ENCODE measurements at regions of chr9 and their contacts with region 1.

Region 1: GRCh38 chr9:4984621-4985385 is at the start of gene JAK2:
- DNase-seq: peak; percentile 87
- H3K4me3 ChIP-seq: peak within 1 kb of the TSS; percentile 72
- H3K27ac ChIP-seq: peak within 1 kb of the TSS; percentile 72
- H3K4me1 ChIP-seq: peaks cover 31% of the 10 kb centered on the region
- CTCF ChIP-seq: peak; percentile 49
- total RNA-seq, gene JAK2: 3.7 and 4.4 TPM in 2 replicates

Region 2: GRCh38 chr9:4604678-4605095 is 380.1 kb before region 1 on chr9:
- CTCF ChIA-PET with region 1: no interaction called
- POLR2A ChIA-PET with region 1: no interaction called
- intact Hi-C with region 1: loop called (anchors 5 kb)
- DNase-seq: peak; percentile 76
- H3K4me3 ChIP-seq: no peak overlapping the region
- H3K27ac ChIP-seq: no peak overlapping the region
- H3K4me1 ChIP-seq: no peaks in the 10 kb centered on the region
- CTCF ChIP-seq: peak; percentile 92

Region 3: DNA sequence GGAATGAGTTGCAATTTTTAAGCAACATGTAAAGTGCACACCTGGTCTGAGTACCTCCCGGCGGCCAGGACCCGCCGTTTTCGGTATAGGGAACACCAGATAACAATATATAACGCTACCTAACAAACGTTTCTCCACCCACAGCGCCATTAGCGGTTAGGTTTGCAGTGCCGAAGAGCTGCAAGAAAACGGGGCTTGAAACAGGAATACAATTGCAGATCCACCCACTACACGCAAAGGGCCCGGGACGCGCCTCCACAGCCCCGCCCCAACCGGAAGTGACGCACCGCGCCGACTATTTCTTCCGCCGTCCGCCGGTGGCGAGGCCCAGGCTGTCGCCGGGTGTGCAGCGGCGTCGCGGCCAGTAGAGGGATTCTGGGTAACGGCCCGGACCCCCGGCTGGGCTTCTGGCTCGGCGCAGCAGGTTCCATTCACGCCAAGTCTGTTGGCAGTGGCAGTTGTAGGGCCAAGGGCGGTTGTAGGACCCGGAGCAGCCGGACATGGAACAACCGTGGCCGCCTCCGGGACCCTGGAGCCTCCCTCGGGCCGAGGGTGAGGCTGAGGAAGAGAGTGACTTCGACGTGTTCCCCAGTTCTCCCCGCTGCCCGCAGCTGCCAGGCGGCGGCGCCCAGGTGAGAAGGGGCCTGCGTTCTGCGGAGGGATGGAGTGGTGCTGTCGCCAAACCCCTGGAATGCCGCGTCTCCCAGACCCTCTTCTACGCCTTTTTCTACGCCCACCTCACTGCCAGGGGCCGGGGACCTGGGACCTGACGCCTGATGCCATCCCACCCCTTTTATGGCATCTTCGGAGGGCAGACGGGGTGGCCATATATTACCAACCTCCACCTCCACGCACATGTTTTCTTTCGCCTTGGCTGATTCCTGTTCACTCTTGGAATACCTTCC is 305.3 kb before region 1 on chr9 and contains the start of gene CDC37L1:
- CTCF ChIA-PET with region 1: no interaction called
- POLR2A ChIA-PET with region 1: no interaction called
- intact Hi-C with region 1: loop called (anchors 2 kb)
- DNase-seq: peak; percentile 96
- H3K4me3 ChIP-seq: peak within 1 kb of the TSS; percentile 90
- H3K27ac ChIP-seq: peak within 1 kb of the TSS; percentile 80
- H3K4me1 ChIP-seq: peaks cover 20% of the 10 kb centered on the region
- CTCF ChIP-seq: peak; percentile 65
- total RNA-seq, gene CDC37L1: 11.7 and 13.8 TPM in 2 replicates

Region 4: GRCh38 chr9:4762108-4762885 is 222.5 kb before region 1 on chr9:
- CTCF ChIA-PET with region 1: interaction called, 4 read pairs
- POLR2A ChIA-PET with region 1: interaction called, 4 read pairs
- intact Hi-C with region 1: loop called (anchors 1 kb)
- DNase-seq: peak; percentile 87
- H3K4me3 ChIP-seq: peak overlapping the region; percentile 58
- H3K27ac ChIP-seq: no peak overlapping the region
- H3K4me1 ChIP-seq: peaks cover 17% of the 10 kb centered on the region
- CTCF ChIP-seq: peak; percentile 90

Region 5: DNA sequence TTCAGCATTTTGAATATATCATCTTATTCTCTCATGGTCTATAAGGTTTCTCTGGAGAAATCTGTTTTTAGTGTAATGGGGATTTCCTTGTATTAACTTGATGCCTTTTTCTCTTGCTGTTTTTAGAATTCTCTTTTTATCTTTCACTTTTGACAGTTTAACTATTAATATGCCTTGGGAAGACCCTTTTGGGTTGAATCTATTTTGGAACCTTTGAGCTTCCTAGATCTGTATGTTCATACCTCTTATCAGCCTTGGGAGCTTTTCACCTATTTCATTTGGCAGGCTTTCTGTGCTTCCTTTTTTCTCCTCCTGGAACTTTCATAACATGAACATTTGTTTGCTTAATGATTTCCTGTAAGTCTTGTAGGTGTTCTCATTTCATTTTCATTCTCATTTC is 169.9 kb before region 1 on chr9:
- CTCF ChIA-PET with region 1: no interaction called
- POLR2A ChIA-PET with region 1: interaction called, 15 read pairs
- intact Hi-C with region 1: no loop called
- DNase-seq: peak; percentile 25
- H3K4me3 ChIP-seq: peak overlapping the region; percentile 42
- H3K27ac ChIP-seq: peak overlapping the region; percentile 58
- H3K4me1 ChIP-seq: peaks cover 47% of the 10 kb centered on the region
- CTCF ChIP-seq: no peak

Region 6: GRCh38 chr9:4939118-4939561 is 45.7 kb before region 1 on chr9:
- CTCF ChIA-PET with region 1: interaction called, 3 read pairs
- POLR2A ChIA-PET with region 1: interaction called, 6 read pairs
- intact Hi-C with region 1: loop called (anchors 2 kb)
- DNase-seq: peak; percentile 67
- H3K4me3 ChIP-seq: peak overlapping the region; percentile 2
- H3K27ac ChIP-seq: peak overlapping the region; percentile 60
- H3K4me1 ChIP-seq: peaks cover 53% of the 10 kb centered on the region
- CTCF ChIP-seq: no peak